MCF 10A (cell line): ENCODE measurements at regions of chr2 and their contacts with region 1.

Region 1: GRCh38 chr2:207625018-207625907 is at the start of gene METTL21A:
- DNase-seq: peak; percentile 85
- H3K4me3 Mint-ChIP-seq: peak within 1 kb of the TSS; percentile 86
- H3K27ac Mint-ChIP-seq: peak within 1 kb of the TSS; percentile 74
- H3K4me1 Mint-ChIP-seq: peaks cover 25% of the 10 kb centered on the region
- H3K27me3 Mint-ChIP-seq: no peaks in the 10 kb centered on the region
- CTCF ChIP-seq: peak; percentile 25
- total RNA-seq, gene METTL21A: 8.4 and 13.5 TPM in 2 replicates

Region 2: DNA sequence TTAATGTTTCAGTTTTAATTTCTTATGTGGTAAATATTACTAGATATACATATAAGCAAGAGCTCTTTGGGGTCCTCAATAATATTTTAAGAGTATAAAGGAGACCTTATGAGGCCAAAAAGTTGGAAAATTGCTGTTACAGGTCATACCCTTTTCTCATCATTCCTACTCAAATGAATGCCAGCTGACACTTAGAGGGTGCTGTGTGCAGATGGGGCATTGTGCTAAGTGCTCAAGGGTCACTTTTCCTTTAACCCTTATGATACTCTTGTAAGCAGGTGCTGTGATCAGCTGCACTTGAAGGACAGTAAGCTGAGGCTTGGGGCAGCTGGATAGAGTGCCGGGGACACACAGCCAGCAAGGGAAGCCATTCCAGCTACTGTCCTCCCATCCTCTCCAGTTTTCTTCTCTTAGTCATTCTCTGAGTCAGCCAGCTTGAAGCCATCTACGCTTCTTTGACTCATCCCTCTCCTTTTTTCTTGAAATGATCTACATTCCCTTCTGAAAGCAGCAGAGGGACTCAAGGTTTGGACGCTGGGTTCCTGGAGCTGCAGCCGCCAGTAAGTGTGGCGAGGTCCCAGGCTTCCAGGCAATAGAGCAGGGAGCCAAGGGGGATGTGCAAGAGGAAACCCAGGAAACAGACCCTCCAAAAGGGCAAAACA is 137.5 kb before region 1 on chr2:
- CTCF ChIA-PET with region 1: no interaction called
- POLR2A ChIA-PET with region 1: no interaction called
- intact Hi-C with region 1: loop called (anchors 1 kb)
- DNase-seq: peak; percentile 75
- H3K4me3 Mint-ChIP-seq: peak overlapping the region; percentile 46
- H3K27ac Mint-ChIP-seq: peak overlapping the region; percentile 59
- H3K4me1 Mint-ChIP-seq: peaks cover 7% of the 10 kb centered on the region
- H3K27me3 Mint-ChIP-seq: no peaks in the 10 kb centered on the region
- CTCF ChIP-seq: peak; percentile 35

Region 3: DNA sequence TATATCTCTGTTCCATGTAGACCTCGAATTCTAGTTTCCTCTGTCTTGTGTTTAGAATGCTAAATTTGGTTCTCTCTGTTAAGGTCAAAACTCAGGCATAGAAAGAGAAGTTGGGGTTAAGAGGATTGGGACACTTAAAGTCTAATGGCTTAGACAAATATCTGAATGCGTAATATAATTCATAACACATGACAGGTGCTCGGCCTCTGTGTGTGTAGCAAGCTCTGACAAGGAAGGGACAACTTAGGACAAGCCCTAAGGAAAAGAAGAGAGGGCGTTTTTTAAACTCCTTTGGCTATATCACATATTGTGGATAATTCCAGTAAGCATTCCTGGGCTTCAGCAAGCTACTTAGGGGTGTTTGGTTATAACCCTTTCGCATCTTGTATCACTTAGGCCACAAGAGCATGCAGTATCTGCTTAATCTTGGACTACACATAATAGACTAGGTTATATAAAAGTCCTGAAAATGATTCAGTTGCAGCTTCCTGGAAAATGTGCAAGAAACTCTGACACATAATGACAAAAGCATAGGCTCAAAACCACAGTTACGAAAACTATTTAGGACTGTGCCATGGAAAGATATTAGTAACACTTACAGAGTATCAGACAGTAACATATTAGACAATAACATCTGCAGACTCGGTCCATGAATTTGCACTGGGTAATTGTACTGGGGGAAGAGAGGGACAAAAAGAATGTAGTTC is 111.6 kb before region 1 on chr2:
- CTCF ChIA-PET with region 1: interaction called, 3 read pairs
- POLR2A ChIA-PET with region 1: interaction called, 10 read pairs
- intact Hi-C with region 1: no loop called
- DNase-seq: peak; percentile 82
- H3K4me3 Mint-ChIP-seq: peak overlapping the region; percentile 55
- H3K27ac Mint-ChIP-seq: peak overlapping the region; percentile 91
- H3K4me1 Mint-ChIP-seq: peaks cover 36% of the 10 kb centered on the region
- H3K27me3 Mint-ChIP-seq: no peaks in the 10 kb centered on the region
- CTCF ChIP-seq: no peak

Region 4: GRCh38 chr2:207720517-207721208 is 95.4 kb after region 1 on chr2:
- CTCF ChIA-PET with region 1: interaction called, 14 read pairs
- POLR2A ChIA-PET with region 1: interaction called, 40 read pairs
- intact Hi-C with region 1: no loop called
- DNase-seq: no peak
- H3K4me3 Mint-ChIP-seq: no peak overlapping the region
- H3K27ac Mint-ChIP-seq: peak overlapping the region; percentile 47
- H3K4me1 Mint-ChIP-seq: peaks cover 34% of the 10 kb centered on the region
- H3K27me3 Mint-ChIP-seq: no peaks in the 10 kb centered on the region
- CTCF ChIP-seq: no peak

Region 5: GRCh38 chr2:207725873-207726578 is 100.8 kb after region 1 on chr2:
- CTCF ChIA-PET with region 1: interaction called, 47 read pairs
- POLR2A ChIA-PET with region 1: interaction called, 40 read pairs
- intact Hi-C with region 1: no loop called
- DNase-seq: peak; percentile 31
- H3K4me3 Mint-ChIP-seq: no peak overlapping the region
- H3K27ac Mint-ChIP-seq: peak overlapping the region; percentile 28
- H3K4me1 Mint-ChIP-seq: peaks cover 25% of the 10 kb centered on the region
- H3K27me3 Mint-ChIP-seq: no peaks in the 10 kb centered on the region
- CTCF ChIP-seq: no peak

Region 6: DNA sequence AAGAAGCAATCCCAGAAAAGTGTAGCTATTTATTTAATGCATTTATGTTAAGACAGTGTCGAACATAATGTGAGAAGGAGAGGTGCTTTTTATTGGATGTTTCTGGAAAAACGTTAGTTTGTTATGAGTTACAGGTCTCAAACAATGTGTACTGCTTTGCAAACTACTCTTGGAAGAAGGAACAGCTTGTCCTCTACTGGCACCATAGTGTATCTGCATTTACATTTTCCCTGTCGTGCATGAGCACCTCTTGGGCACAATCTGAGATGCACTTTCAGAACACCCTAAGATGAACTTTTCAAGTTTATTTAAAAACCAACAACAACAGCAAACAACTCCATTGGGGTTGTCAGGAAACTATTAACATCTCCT is 109.0 kb after region 1 on chr2:
- CTCF ChIA-PET with region 1: interaction called, 47 read pairs
- POLR2A ChIA-PET with region 1: interaction called, 20 read pairs
- intact Hi-C with region 1: loop called (anchors 1 kb)
- DNase-seq: peak; percentile 43
- H3K4me3 Mint-ChIP-seq: no peak overlapping the region
- H3K27ac Mint-ChIP-seq: no peak overlapping the region
- H3K4me1 Mint-ChIP-seq: peaks cover 5% of the 10 kb centered on the region
- H3K27me3 Mint-ChIP-seq: no peaks in the 10 kb centered on the region
- CTCF ChIP-seq: peak; percentile 26

Region 7: GRCh38 chr2:208072250-208072892 is 447.1 kb after region 1 on chr2:
- CTCF ChIA-PET with region 1: no interaction called
- POLR2A ChIA-PET with region 1: no interaction called
- intact Hi-C with region 1: loop called (anchors 5 kb)
- DNase-seq: peak; percentile 75
- H3K4me3 Mint-ChIP-seq: no peak overlapping the region
- H3K27ac Mint-ChIP-seq: no peak overlapping the region
- H3K4me1 Mint-ChIP-seq: no peaks in the 10 kb centered on the region
- H3K27me3 Mint-ChIP-seq: no peaks in the 10 kb centered on the region
- CTCF ChIP-seq: peak; percentile 68